ENCODE measurements at regions of chr5 and their contacts with region 1.

Region 1: DNA sequence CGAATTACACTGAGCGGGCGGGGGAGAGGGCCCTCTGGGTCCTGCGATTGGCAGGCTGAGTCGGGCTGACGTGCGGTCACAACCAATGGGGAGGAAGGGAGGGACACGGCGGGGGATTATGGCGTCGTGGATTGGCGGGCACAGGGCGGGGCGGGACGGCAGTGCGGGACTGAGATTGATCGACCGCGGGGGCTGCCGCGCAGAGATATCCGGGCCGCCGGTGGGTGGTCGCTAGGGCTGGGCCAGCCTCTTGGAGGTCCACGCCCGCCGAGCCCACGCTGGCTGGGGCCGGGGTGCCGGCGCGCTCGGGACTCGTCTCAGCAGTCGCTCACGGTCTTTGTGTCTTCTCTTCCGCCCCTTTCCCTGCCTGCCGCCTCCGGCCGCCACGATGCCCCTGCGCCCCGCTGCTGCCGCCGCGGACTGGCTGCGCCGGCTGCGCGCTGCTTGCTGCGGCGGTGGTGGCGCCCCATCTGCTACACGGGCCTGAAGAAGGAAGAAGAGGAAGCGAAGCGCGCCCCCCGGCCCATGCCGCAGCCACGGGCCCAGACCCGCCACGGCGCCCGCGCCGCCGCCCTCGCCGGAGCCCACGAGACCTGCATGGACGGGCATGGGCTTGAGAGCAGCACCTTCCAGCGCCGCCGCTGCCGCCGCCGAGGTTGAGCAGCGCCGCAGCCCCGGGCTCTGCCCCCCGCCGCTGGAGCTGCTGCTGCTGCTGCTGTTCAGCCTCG is at the start of gene RGMB:
- DNase-seq: peak; percentile 99
- ATAC-seq: peak; percentile 69
- H3K4me3 ChIP-seq: peak within 1 kb of the TSS; percentile 89
- H3K27ac ChIP-seq: peak within 1 kb of the TSS; percentile 83
- H3K4me1 ChIP-seq: peaks cover 30% of the 10 kb centered on the region
- H3K27me3 ChIP-seq: no peaks in the 10 kb centered on the region
- CTCF ChIP-seq: no peak
- total RNA-seq, gene RGMB: 31.1 and 37.3 TPM in 2 replicates

Region 2: GRCh38 chr5:97224112-97224750 is 1549.4 kb before region 1 on chr5:
- CTCF ChIA-PET with region 1: no interaction called
- POLR2A ChIA-PET with region 1: no interaction called
- intact Hi-C with region 1: loop called (anchors 2 kb)
- DNase-seq: peak; percentile 63
- ATAC-seq: peak; percentile 86
- H3K4me3 ChIP-seq: no peak overlapping the region
- H3K27ac ChIP-seq: no peak overlapping the region
- H3K4me1 ChIP-seq: peaks cover 15% of the 10 kb centered on the region
- H3K27me3 ChIP-seq: no peaks in the 10 kb centered on the region
- CTCF ChIP-seq: no peak

Region 3: GRCh38 chr5:97735209-97735608 is 1038.4 kb before region 1 on chr5:
- CTCF ChIA-PET with region 1: no interaction called
- POLR2A ChIA-PET with region 1: no interaction called
- intact Hi-C with region 1: loop called (anchors 10 kb)
- DNase-seq: peak; percentile 85
- ATAC-seq: peak; percentile 95
- H3K4me3 ChIP-seq: no peak overlapping the region
- H3K27ac ChIP-seq: peak overlapping the region; percentile 28
- H3K4me1 ChIP-seq: peaks cover 11% of the 10 kb centered on the region
- H3K27me3 ChIP-seq: no peaks in the 10 kb centered on the region
- CTCF ChIP-seq: no peak

Region 4: GRCh38 chr5:98200726-98201541 is 572.7 kb before region 1 on chr5:
- CTCF ChIA-PET with region 1: no interaction called
- POLR2A ChIA-PET with region 1: no interaction called
- intact Hi-C with region 1: loop called (anchors 5 kb)
- DNase-seq: no peak
- ATAC-seq: no peak
- H3K4me3 ChIP-seq: no peak overlapping the region
- H3K27ac ChIP-seq: no peak overlapping the region
- H3K4me1 ChIP-seq: no peaks in the 10 kb centered on the region
- H3K27me3 ChIP-seq: no peaks in the 10 kb centered on the region
- CTCF ChIP-seq: no peak

Region 5: DNA sequence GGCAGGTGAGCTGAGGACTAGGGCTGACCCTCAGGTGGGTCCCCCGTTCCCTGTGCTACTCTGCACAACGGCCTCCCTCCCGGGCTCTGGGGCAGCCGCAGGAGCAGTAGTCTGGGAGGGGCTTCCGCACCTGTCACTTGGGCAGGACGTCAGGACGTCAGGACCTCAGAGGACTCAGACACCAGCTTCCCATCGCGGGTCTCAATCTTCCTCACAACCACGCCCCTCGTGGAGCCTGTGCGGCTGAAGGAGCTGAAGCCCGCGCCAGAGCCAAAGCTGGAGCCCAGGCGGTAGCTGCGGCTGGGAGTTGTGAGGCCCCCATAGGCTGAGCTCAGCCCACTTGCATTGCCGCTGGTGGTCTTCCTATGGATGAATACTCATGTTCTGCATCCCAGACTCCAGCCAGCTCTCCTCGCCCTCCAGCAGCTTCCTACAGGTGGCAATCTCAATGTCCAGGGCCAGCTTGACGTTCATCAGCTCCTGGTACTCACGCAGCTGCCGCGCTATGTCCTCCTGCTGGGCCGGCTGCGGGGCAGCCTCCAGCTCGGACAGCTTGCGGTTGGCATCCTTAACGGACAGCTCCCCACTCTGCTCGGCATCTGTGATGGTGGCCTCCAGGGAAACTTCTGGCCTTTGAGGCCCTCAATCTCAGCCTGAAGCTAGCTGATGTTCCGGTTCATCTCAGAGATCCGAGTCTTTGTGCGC is 381.6 kb before region 1 on chr5:
- CTCF ChIA-PET with region 1: no interaction called
- POLR2A ChIA-PET with region 1: interaction called, 11 read pairs
- intact Hi-C with region 1: no loop called
- DNase-seq: no peak
- ATAC-seq: no peak
- H3K4me3 ChIP-seq: no peak overlapping the region
- H3K27ac ChIP-seq: no peak overlapping the region
- H3K4me1 ChIP-seq: no peaks in the 10 kb centered on the region
- H3K27me3 ChIP-seq: no peaks in the 10 kb centered on the region
- CTCF ChIP-seq: no peak

Region 6: GRCh38 chr5:98570661-98571191 is 202.9 kb before region 1 on chr5:
- CTCF ChIA-PET with region 1: no interaction called
- POLR2A ChIA-PET with region 1: no interaction called
- intact Hi-C with region 1: loop called (anchors 5 kb)
- DNase-seq: peak; percentile 27
- ATAC-seq: peak; percentile 44
- H3K4me3 ChIP-seq: no peak overlapping the region
- H3K27ac ChIP-seq: no peak overlapping the region
- H3K4me1 ChIP-seq: peaks cover 22% of the 10 kb centered on the region
- H3K27me3 ChIP-seq: no peaks in the 10 kb centered on the region
- CTCF ChIP-seq: no peak

Region 7: GRCh38 chr5:99032234-99033013 is 258.8 kb after region 1 on chr5:
- CTCF ChIA-PET with region 1: no interaction called
- POLR2A ChIA-PET with region 1: no interaction called
- intact Hi-C with region 1: loop called (anchors 5 kb)
- DNase-seq: peak; percentile 91
- ATAC-seq: peak; percentile 84
- H3K4me3 ChIP-seq: peak overlapping the region; percentile 67
- H3K27ac ChIP-seq: peak overlapping the region; percentile 25; the same call in 1 of the 2 replicates
- H3K4me1 ChIP-seq: peaks cover 29% of the 10 kb centered on the region
- H3K27me3 ChIP-seq: no peaks in the 10 kb centered on the region
- CTCF ChIP-seq: peak; percentile 98

Measured in PC-3 (cell line).